ENCODE measurements at regions of chr7 and their contacts with region 1.

Region 1: DNA sequence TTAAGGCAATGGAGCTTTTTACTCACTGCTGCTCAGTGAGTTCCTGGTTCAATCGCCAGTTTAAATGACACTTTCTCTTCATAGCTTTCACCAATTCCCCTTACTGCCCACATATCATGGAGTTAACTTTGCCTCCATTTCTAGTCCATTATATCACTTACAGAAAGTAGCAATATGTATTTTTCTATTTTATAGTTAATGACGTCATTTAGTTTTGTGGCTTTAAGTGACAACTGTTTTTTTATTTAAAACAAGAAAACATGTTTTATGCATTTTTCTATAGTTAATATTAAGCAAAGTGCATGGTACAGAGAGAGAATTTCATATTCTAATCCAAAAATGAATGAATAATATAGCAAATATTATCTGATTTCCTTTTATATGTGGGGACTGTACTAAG is 363.3 kb downstream of the CDC14C start:
- DNase-seq: no peak
- H3K4me3 ChIP-seq: no peak overlapping the region
- H3K27ac ChIP-seq: no peak overlapping the region
- H3K4me1 ChIP-seq: no peaks in the 10 kb centered on the region
- H3K27me3 ChIP-seq: 0 out of 2 replicates have a peak, but pooled peaks cover 6% of the 10 kb centered on the region
- CTCF ChIP-seq: no peak

Region 2: GRCh38 chr7:49174396-49174795 is 113.3 kb before region 1 on chr7:
- CTCF ChIA-PET with region 1: no interaction called
- POLR2A ChIA-PET with region 1: no interaction called
- intact Hi-C with region 1: no loop called
- DNase-seq: peak in 1 of 2 experiments; percentile 56
- H3K4me3 ChIP-seq: no peak overlapping the region
- H3K27ac ChIP-seq: no peak overlapping the region
- H3K4me1 ChIP-seq: no peaks in the 10 kb centered on the region
- H3K27me3 ChIP-seq: no peaks in the 10 kb centered on the region
- CTCF ChIP-seq: no peak

Region 3: GRCh38 chr7:49228426-49229098 is 59.1 kb before region 1 on chr7:
- CTCF ChIA-PET with region 1: no interaction called
- POLR2A ChIA-PET with region 1: no interaction called
- intact Hi-C with region 1: no loop called
- DNase-seq: no peak
- H3K4me3 ChIP-seq: no peak overlapping the region
- H3K27ac ChIP-seq: no peak overlapping the region
- H3K4me1 ChIP-seq: no peaks in the 10 kb centered on the region
- H3K27me3 ChIP-seq: 0 out of 2 replicates have a peak, but pooled peaks cover 4% of the 10 kb centered on the region
- CTCF ChIP-seq: no peak

Region 4: DNA sequence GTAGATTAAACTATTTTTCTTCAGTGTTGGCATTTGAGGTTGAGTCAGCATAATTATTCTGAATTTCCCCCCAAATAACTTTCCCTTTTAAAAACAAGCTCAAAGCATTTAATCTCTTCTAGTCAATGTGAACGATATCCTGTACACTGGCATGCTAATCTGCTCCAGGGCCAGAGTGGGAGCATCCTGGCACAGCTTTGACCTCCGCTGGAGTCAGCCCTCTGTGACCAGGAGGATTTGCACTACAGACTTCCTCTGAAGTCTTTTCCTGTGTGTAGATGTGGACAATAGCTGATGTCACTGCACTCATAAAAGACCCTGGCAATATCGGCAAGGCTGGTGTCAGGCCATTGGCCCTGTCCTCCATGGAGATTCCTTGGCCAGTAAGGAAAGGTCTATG is 23.1 kb before region 1 on chr7:
- CTCF ChIA-PET with region 1: interaction called, 12 read pairs
- POLR2A ChIA-PET with region 1: no interaction called
- intact Hi-C with region 1: no loop called
- DNase-seq: peak in 1 of 2 experiments; percentile 17
- H3K4me3 ChIP-seq: no peak overlapping the region
- H3K27ac ChIP-seq: no peak overlapping the region
- H3K4me1 ChIP-seq: no peaks in the 10 kb centered on the region
- H3K27me3 ChIP-seq: peaks cover 26% of the 10 kb centered on the region; the same call in 1 of the 2 replicates
- CTCF ChIP-seq: no peak

Measured in PC-9 (cell line).